ENCODE measurements at regions of chr19 and their contacts with region 1.

Region 1: DNA sequence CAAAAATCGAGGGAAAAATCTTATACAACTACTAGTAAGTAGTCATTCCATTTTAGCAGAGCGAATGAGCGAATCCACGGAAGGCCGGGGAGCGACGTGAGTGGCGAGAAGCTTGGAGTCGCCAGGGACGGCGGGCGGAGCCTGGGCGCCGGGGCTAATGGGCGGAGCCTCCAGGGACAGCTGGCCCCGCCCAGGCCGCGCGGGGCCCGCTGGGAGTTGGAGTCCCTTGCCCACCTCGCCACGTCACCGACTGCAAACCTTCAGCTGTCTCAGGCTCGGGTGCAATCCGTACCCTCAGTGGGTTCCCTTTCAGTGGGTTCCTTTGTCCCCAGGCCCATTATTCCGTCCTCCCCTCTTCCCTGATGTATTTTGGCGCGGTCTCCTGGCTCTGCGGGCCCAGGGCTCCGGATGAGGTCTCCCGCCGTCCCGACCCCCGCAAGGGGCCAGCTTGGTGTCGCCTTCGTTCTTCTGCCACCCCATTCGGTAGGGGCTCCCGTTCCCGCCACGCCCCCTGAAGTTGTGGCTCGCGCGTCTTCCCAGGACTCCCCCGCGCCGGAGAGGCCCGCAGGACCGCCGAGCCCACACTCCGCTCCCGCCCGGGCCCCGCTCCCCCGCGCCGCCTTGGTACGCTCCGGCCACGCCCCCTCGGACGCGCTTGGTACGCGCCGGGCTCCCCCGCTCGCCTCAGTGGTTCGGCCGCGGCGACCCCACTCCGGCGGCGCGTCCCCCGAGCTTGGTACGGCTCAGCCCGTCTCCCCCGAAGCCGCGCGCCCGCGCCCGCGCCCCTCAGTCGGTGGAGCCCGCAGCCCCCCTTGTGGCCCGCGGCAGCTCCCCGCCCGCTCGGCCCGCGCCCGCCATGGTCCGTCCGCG is at the start of gene PTOV1:
- DNase-seq: peak; percentile 96
- ATAC-seq: peak; percentile 84
- H3K4me3 Mint-ChIP-seq: peak within 1 kb of the TSS; percentile 92
- H3K27ac Mint-ChIP-seq: peak within 1 kb of the TSS; percentile 95
- H3K4me1 Mint-ChIP-seq: peaks cover 56% of the 10 kb centered on the region
- H3K27me3 Mint-ChIP-seq: no peaks in the 10 kb centered on the region
- CTCF ChIP-seq: no peak
- total RNA-seq, gene PTOV1: 103 and 107 TPM in 2 replicates

Region 2: GRCh38 chr19:49487277-49488045 is 363.2 kb before region 1 on chr19 and contains the start of gene RPL13A:
- CTCF ChIA-PET with region 1: no interaction called
- POLR2A ChIA-PET with region 1: interaction called, 13 read pairs
- intact Hi-C with region 1: no loop called
- DNase-seq: peak; percentile 100
- ATAC-seq: peak; percentile 91
- H3K4me3 Mint-ChIP-seq: peak within 1 kb of the TSS; percentile 93
- H3K27ac Mint-ChIP-seq: peak within 1 kb of the TSS; percentile 91
- H3K4me1 Mint-ChIP-seq: peaks cover 37% of the 10 kb centered on the region
- H3K27me3 Mint-ChIP-seq: peaks cover 2% of the 10 kb centered on the region
- CTCF ChIP-seq: no peak
- total RNA-seq, gene RPL13A: 6,642 and 7,342 TPM in 2 replicates

Region 3: GRCh38 chr19:49808711-49809159 is 42.0 kb before region 1 on chr19:
- CTCF ChIA-PET with region 1: no interaction called
- POLR2A ChIA-PET with region 1: interaction called, 23 read pairs
- intact Hi-C with region 1: loop called (anchors 1 kb)
- DNase-seq: peak; percentile 88
- ATAC-seq: peak; percentile 56
- H3K4me3 Mint-ChIP-seq: peak overlapping the region; percentile 91
- H3K27ac Mint-ChIP-seq: peak overlapping the region; percentile 74
- H3K4me1 Mint-ChIP-seq: peaks cover 49% of the 10 kb centered on the region
- H3K27me3 Mint-ChIP-seq: no peaks in the 10 kb centered on the region
- CTCF ChIP-seq: no peak

Region 4: DNA sequence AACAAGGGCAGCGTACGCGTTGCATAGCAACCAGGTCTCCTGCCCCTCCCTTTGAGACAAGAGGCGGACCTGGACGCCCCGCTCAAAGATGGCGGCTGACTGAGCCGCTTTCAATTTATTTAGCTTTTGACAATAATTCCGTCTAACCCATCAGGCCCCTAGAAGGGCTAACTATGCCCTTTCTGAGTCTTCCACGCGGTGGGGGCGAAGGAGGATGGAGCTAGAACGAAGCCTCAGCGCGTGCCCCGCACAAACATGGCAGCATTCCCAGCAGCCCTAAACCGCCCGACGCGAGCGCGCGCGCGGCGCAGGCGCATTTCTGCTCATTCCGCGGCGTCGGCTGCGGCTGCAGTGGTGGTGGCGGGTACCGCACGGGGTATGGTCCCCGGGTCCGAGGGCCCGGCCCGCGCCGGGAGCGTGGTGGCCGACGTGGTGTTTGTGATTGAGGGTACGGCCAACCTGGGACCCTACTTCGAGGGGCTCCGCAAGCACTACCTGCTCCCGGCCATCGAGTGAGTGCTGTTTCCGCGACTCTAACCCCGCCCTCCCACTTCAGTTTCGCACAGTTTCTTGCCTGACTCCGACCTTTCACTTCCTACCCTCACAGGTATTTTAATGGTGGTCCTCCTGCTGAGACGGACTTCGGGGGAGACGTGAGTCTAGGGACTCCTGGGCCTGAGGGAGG is 32.6 kb before region 1 on chr19 and contains the start of gene MED25:
- CTCF ChIA-PET with region 1: interaction called, 4 read pairs
- POLR2A ChIA-PET with region 1: interaction called, 23 read pairs
- intact Hi-C with region 1: loop called (anchors 1 kb)
- DNase-seq: peak; percentile 91
- ATAC-seq: peak; percentile 59
- H3K4me3 Mint-ChIP-seq: peak within 1 kb of the TSS; percentile 98
- H3K27ac Mint-ChIP-seq: peak within 1 kb of the TSS; percentile 99
- H3K4me1 Mint-ChIP-seq: peaks cover 40% of the 10 kb centered on the region
- H3K27me3 Mint-ChIP-seq: no peaks in the 10 kb centered on the region
- CTCF ChIP-seq: no peak
- total RNA-seq, gene MED25: 70.1 and 88.8 TPM in 2 replicates

Region 5: DNA sequence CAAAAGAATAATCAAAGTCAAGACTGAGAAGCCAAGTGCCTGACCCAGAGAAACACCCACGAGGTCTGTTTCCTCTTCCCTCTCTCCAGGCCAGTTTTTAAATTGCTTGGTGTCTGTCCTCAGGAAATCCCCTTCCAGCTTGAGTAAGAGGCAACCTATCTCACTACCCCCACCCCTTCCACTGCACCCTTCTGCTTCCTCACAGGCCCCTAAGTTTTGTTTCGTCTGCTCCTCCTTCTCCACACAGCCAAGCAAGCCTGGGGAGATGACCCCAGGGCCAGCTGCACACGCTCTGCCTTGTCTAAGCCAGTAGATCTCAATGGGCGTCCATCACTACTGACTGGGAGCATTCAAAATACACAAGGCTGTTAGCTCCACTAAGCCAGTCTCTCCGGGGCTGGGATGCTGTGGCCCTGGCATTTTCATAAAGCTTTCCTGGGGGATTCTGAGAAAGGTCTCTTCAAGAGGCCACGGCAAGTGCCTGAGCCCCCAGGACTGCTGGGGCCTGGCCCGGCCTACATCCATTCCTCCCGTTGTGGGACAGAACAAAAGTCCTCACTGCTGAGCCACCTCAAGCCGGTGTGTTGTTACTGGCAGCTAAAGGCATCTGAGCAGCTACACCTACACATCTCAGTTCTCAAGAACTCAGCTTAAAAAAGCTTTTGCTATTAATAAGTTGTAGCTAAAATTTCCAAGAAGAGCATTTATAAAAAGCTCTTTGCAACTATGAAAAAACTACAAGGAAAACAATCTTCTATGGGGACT is 60.9 kb after region 1 on chr19:
- CTCF ChIA-PET with region 1: no interaction called
- POLR2A ChIA-PET with region 1: interaction called, 11 read pairs
- intact Hi-C with region 1: no loop called
- DNase-seq: no peak
- ATAC-seq: peak; percentile 80
- H3K4me3 Mint-ChIP-seq: peak overlapping the region; percentile 68
- H3K27ac Mint-ChIP-seq: peak overlapping the region; percentile 89
- H3K4me1 Mint-ChIP-seq: peaks cover 76% of the 10 kb centered on the region
- H3K27me3 Mint-ChIP-seq: no peaks in the 10 kb centered on the region
- CTCF ChIP-seq: no peak

Region 6: DNA sequence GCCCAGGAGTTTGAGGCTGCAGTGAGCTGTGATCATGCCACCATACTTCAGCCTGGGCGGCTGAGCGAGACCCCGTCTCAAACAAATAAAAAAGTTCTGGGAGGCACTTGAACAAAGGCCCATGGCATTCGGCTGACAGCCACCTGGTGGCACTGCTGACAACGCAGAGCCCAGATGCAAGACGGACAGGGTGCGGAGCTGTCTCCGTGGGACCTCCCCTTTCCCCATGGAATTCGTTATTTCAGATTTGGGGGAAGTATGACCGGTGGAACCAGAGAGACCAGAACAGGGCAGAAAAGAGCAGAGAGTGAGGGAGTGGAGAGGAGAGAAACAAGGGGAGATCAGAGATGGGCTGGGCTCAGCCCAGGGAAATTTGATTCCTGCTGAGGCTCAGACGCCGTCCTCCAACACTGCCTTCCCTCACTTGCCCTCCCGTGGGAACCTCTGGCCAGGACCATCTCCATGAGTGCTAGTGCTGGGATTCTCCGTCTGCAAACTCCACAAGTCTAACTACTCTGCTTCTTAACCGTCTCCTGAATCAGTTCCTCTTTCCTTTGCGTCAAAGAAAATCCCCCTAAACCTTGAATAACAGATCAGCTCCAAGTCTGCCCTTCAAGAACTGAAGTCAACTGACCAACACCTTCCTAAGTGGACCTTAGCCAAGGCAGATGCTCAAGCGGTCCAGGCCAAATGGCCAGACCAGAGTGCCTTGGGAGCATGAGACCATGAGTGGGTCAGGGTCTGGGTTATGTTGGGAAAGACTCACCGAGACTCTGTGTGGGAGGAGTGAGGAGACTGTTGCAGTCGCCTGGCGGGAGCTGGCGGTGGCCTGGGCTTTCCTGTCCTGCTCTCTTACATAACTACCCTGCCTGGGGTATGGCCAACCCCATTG is 66.4 kb after region 1 on chr19:
- CTCF ChIA-PET with region 1: no interaction called
- POLR2A ChIA-PET with region 1: interaction called, 14 read pairs
- intact Hi-C with region 1: no loop called
- DNase-seq: peak; percentile 41
- ATAC-seq: peak; percentile 74
- H3K4me3 Mint-ChIP-seq: peak overlapping the region; percentile 77
- H3K27ac Mint-ChIP-seq: peak overlapping the region; percentile 94
- H3K4me1 Mint-ChIP-seq: peaks cover 77% of the 10 kb centered on the region
- H3K27me3 Mint-ChIP-seq: no peaks in the 10 kb centered on the region
- CTCF ChIP-seq: no peak

Measured in activated B cell treated with CpG ODN at 0.5 μM for 24 hours (primary cell).